HEK293 (cell line): ENCODE measurements at regions of chr6 and their contacts with region 1.

Region 1: DNA sequence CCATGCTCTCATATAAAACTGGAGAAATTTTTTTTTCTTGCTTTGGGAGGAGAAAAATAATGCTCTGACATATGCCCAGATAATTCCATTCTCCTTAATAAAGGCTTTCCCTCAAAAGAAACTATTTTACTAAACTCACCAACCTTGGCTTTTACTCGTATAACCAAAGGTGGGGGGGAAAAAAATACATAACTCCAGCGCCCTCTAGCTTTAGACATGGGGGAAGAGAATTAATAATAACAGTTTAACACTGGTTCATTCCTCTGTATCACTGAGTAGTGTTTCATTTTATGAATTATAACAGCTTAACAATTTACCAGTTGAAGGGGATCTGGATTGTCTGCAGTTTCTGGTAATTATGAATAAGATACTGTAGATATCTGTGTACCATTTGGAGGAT is 1226.1 kb downstream of the GRIK2 start:
- H3K4me3 ChIP-seq: no peak overlapping the region
- H3K27ac ChIP-seq: no peak overlapping the region
- H3K4me1 ChIP-seq: no peaks in the 10 kb centered on the region
- CTCF ChIP-seq: no peak

Region 2: DNA sequence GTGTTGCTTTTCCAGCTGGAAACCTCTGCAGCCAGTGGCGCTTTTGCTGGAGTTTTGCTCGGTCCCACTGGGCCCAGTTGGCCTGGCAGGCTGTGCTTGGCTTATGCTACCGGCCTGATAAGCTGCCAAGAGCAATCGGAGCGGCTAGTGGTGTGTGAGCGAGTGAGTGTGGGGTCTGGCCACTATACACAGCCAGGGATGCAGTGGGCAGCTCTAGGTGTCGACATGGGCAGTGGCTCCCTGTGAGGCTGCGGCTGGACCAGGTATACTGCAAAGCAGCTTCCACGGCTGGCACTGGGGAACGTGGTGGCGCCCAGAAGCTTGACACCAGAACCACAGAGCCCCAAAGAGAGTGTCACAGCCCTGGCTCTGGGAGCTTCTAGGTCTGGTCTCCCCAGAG is 229.6 kb before region 1 on chr6:
- CTCF ChIA-PET with region 1: no interaction called
- POLR2A ChIA-PET with region 1: no interaction called
- H3K4me3 ChIP-seq: no peak overlapping the region
- H3K27ac ChIP-seq: no peak overlapping the region
- H3K4me1 ChIP-seq: no peaks in the 10 kb centered on the region
- CTCF ChIP-seq: no peak

Region 3: GRCh38 chr6:102631921-102632320 is 12.3 kb after region 1 on chr6:
- CTCF ChIA-PET with region 1: interaction called, 15 read pairs
- POLR2A ChIA-PET with region 1: no interaction called
- H3K4me3 ChIP-seq: no peak overlapping the region
- H3K27ac ChIP-seq: no peak overlapping the region
- H3K4me1 ChIP-seq: no peaks in the 10 kb centered on the region
- CTCF ChIP-seq: no peak

Region 4: GRCh38 chr6:102907181-102907580 is 287.6 kb after region 1 on chr6:
- CTCF ChIA-PET with region 1: no interaction called
- POLR2A ChIA-PET with region 1: no interaction called
- H3K4me3 ChIP-seq: no peak overlapping the region
- H3K27ac ChIP-seq: no peak overlapping the region
- H3K4me1 ChIP-seq: no peaks in the 10 kb centered on the region
- CTCF ChIP-seq: no peak